ENCODE measurements at regions of chr14 and their contacts with region 1.

Region 1: GRCh38 chr14:89178802-89179535 is 238.1 kb downstream of the FOXN3 start:
- DNase-seq: no peak
- H3K4me3 ChIP-seq: no peak overlapping the region
- H3K4me3 Mint-ChIP-seq: no peak overlapping the region
- H3K27ac Mint-ChIP-seq: no peak overlapping the region
- H3K4me1 ChIP-seq: peaks cover 5% of the 10 kb centered on the region
- H3K4me1 Mint-ChIP-seq: no peaks in the 10 kb centered on the region
- H3K27me3 ChIP-seq: no peaks in the 10 kb centered on the region
- H3K27me3 Mint-ChIP-seq: no peaks in the 10 kb centered on the region
- CTCF ChIP-seq: no peak

Region 2: DNA sequence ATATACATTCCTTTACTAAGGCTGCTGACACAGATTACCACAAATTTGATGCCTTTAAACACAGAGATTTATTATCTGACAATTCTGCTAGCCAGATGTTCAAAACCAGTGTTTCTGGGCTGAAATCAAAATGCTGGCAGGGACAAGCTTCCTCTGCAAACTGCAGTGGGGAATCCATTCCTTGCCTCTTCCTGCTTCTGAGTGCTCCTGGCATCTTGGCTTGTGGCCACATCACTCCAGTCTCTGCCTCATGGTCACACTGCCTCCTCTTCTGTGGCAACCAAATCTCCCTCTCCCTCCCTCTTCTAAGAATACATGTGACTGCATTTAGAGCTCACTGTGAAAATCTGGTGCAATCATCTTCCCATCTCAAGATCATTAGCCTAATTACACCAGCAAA is 118.8 kb before region 1 on chr14:
- CTCF ChIA-PET with region 1: no interaction called
- POLR2A ChIA-PET with region 1: interaction called, 4 read pairs
- intact Hi-C with region 1: loop called (anchors 5 kb)
- DNase-seq: no peak
- H3K4me3 ChIP-seq: no peak overlapping the region
- H3K4me3 Mint-ChIP-seq: no peak overlapping the region
- H3K27ac Mint-ChIP-seq: no peak overlapping the region
- H3K4me1 ChIP-seq: peaks cover 23% of the 10 kb centered on the region
- H3K4me1 Mint-ChIP-seq: peaks cover 13% of the 10 kb centered on the region
- H3K27me3 ChIP-seq: no peaks in the 10 kb centered on the region
- H3K27me3 Mint-ChIP-seq: no peaks in the 10 kb centered on the region
- CTCF ChIP-seq: no peak

Region 3: DNA sequence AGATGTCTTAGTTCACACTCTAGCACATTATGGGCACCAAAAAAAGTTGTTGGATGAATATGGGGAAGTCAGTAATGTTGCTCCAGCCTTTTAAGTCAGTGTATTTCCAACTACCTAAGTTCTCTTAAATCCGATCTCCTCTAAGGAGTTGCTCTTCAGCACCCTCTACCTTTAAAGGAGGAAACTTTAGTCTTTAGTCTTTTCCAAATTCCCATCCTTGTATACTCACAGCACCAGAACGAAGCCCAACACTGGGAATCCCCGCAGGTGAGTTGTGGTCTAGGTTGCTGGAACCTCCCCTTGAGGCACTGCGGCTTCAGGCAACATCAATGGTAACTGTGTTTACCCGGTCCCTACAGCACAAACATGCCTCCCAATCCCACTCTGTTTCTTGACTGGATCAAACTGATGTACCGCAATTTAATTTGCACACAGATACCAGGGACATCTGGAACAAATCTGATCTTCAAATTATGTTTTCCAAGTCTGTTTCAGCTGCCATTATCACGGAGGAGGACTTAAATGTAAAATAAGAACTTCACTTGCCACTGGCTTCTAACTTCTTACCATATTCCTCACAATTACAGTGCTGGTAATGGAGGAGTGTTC is 59.1 kb after region 1 on chr14:
- CTCF ChIA-PET with region 1: no interaction called
- POLR2A ChIA-PET with region 1: no interaction called
- intact Hi-C with region 1: loop called (anchors 2 kb)
- DNase-seq: no peak
- H3K4me3 ChIP-seq: no peak overlapping the region
- H3K4me3 Mint-ChIP-seq: no peak overlapping the region
- H3K27ac Mint-ChIP-seq: no peak overlapping the region
- H3K4me1 ChIP-seq: no peaks in the 10 kb centered on the region
- H3K4me1 Mint-ChIP-seq: no peaks in the 10 kb centered on the region
- H3K27me3 ChIP-seq: no peaks in the 10 kb centered on the region
- H3K27me3 Mint-ChIP-seq: no peaks in the 10 kb centered on the region
- CTCF ChIP-seq: peak in 1 of 2 experiments; percentile 34

Region 4: DNA sequence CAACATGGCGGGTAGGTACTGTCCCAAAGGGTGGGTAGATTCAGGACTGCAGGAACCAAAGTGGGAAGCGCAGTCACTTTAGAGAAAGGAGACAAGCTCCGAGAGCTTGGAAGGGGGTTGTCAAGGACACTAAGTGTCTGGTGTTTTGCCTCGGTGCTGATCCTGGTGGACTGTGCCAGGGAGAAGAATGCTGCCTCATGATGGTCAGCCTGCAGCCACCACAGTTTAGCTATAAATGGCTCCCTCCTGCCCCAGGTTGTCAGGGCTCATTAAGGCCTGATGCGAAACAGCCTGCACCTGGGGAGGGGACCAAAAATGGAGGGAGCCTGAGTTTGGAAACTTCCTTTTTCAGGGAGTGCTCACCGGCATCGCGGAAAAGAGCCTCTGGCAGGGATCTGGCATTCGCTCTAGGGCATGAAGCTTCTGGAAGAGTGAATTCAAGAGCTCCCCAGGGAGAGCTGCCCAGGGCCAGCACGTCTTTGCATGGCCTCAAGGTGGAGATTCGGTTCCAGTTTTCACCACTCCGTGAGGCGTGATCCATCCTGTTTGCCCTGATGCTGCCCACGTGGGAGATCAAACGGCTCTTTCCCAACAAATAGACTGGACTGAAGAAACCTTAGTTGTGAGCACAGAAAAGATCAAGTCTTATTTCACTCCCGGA is 74.0 kb after region 1 on chr14:
- CTCF ChIA-PET with region 1: no interaction called
- POLR2A ChIA-PET with region 1: no interaction called
- intact Hi-C with region 1: loop called (anchors 2 kb)
- DNase-seq: peak in 1 of 2 experiments; percentile 34
- H3K4me3 ChIP-seq: no peak overlapping the region
- H3K4me3 Mint-ChIP-seq: no peak overlapping the region
- H3K27ac Mint-ChIP-seq: no peak overlapping the region
- H3K4me1 ChIP-seq: peaks cover 4% of the 10 kb centered on the region; the same call in 1 of the 2 replicates
- H3K4me1 Mint-ChIP-seq: peaks cover 6% of the 10 kb centered on the region
- H3K27me3 ChIP-seq: no peaks in the 10 kb centered on the region
- H3K27me3 Mint-ChIP-seq: no peaks in the 10 kb centered on the region
- CTCF ChIP-seq: peak; percentile 11 to 20

Measured in Caco-2 (cell line).